ENCODE measurements at regions of chr20 and their contacts with region 1.

Region 1: GRCh38 chr20:48295445-48295963 is 510.2 kb upstream of the SULF2 start:
- DNase-seq: peak; percentile 88
- H3K4me3 ChIP-seq: no peak overlapping the region
- H3K27ac ChIP-seq: no peak overlapping the region
- H3K4me1 ChIP-seq: peaks cover 31% of the 10 kb centered on the region
- H3K27me3 ChIP-seq: no peaks in the 10 kb centered on the region
- CTCF ChIP-seq: peak; percentile 64 to 66

Region 2: GRCh38 chr20:47196091-47197081 is 1099.1 kb before region 1 on chr20:
- CTCF ChIA-PET with region 1: no interaction called
- dilution Hi-C with region 1: no loop called
- in situ Hi-C with region 1: no loop called
- intact Hi-C with region 1: loop called (anchors 5 kb)
- DNase-seq: peak; percentile 47
- H3K4me3 ChIP-seq: no peak overlapping the region
- H3K27ac ChIP-seq: no peak overlapping the region
- H3K4me1 ChIP-seq: peaks cover 10% of the 10 kb centered on the region
- H3K27me3 ChIP-seq: no peaks in the 10 kb centered on the region
- CTCF ChIP-seq: peak; percentile 86 to 96

Region 3: GRCh38 chr20:47677635-47678453 is 617.7 kb before region 1 on chr20:
- CTCF ChIA-PET with region 1: no interaction called
- dilution Hi-C with region 1: no loop called
- in situ Hi-C with region 1: loop called in 1 of 2 experiments (anchors 25 kb)
- intact Hi-C with region 1: loop called (anchors 1 kb)
- DNase-seq: peak; percentile 55
- H3K4me3 ChIP-seq: no peak overlapping the region
- H3K27ac ChIP-seq: no peak overlapping the region
- H3K4me1 ChIP-seq: no peaks in the 10 kb centered on the region
- H3K27me3 ChIP-seq: no peaks in the 10 kb centered on the region
- CTCF ChIP-seq: peak; percentile 68 to 79

Region 4: GRCh38 chr20:47792021-47792618 is 503.4 kb before region 1 on chr20:
- CTCF ChIA-PET with region 1: no interaction called
- dilution Hi-C with region 1: no loop called
- in situ Hi-C with region 1: loop called in 1 of 2 experiments (anchors 10 kb)
- intact Hi-C with region 1: loop called (anchors 1 kb)
- DNase-seq: peak; percentile 97
- H3K4me3 ChIP-seq: no peak overlapping the region
- H3K27ac ChIP-seq: peak overlapping the region; percentile 83
- H3K4me1 ChIP-seq: peaks cover 58% of the 10 kb centered on the region
- H3K27me3 ChIP-seq: no peaks in the 10 kb centered on the region
- CTCF ChIP-seq: no peak

Region 5: DNA sequence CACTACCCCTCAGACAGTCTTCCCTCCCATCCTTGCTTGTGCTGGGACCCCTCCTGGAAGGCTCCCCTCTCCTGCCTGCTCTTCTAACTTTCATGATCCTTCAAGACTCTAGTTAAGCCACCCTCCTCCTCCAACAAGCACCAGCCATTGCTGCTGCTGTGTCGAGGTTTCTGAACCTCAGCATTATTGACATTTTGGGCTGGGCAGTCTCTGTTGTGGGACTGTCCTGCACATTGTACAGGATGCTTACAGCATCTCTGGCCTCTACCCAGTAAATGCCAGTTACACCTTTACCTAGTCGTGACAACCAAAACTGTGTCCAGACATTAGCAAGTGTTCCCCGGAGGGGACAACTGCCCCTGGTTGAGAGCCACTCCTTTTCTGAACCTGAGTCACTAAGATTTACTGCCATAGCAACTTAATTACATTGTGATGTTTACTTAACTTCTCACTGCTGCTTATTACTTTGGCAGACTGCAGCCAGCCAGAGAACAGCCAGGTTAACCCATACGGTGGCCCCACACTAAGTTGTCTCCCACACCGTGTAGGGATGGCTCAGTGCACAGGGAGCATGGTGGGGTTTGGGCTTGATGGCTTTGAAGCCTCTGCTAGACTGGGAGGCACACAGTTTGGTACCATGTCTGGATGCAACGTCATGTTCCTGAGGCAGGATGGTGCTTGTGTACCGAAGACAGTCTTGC is 305.6 kb before region 1 on chr20:
- CTCF ChIA-PET with region 1: no interaction called
- dilution Hi-C with region 1: no loop called
- in situ Hi-C with region 1: no loop called
- intact Hi-C with region 1: loop called (anchors 10 kb)
- DNase-seq: no peak
- H3K4me3 ChIP-seq: no peak overlapping the region
- H3K27ac ChIP-seq: no peak overlapping the region
- H3K4me1 ChIP-seq: peaks cover 5% of the 10 kb centered on the region
- H3K27me3 ChIP-seq: no peaks in the 10 kb centered on the region
- CTCF ChIP-seq: no peak

Region 6: DNA sequence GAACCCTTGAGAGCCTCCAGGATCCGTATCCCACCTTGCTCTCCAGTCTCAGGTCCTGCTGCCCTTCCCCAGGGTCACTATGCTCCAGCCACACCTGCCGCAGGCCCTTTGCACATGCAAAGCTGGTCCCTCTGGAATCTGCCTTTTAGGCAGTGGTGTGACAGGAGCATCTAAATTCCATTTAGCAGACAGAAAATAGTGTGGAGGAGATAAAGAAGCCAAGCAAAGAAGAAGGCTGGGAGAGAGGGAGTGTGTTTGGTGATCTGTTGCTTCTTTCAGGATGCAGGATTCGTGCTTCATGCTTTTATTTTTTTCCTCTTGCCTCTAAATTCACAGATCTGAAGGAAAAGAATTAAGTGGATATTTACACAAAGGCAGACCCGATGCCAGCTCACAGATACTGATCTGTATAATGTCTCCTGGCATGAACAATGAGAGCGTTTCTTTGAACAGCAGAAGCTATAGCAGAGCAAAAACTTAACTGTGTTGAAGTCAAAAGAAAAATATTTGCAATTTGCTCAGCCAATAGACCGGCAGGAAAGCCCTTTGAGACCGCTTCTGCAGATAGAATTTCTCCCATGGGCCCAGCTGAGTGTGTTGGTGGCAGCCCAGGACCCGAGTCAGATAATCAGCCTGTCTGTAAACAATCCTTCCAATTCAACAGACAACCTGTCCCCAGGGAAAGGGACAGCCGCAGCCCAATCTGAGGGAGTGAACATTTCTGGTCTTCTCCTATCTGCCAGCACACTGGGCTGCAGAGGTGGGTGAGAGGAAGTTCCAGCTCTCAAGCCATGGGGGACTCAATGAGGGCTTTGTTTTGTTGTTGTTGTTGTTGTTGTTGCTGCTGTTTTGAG is 48.8 kb before region 1 on chr20:
- CTCF ChIA-PET with region 1: no interaction called
- dilution Hi-C with region 1: no loop called
- in situ Hi-C with region 1: no loop called
- intact Hi-C with region 1: no loop called
- DNase-seq: no peak
- H3K4me3 ChIP-seq: no peak overlapping the region
- H3K27ac ChIP-seq: no peak overlapping the region
- H3K4me1 ChIP-seq: no peaks in the 10 kb centered on the region
- H3K27me3 ChIP-seq: no peaks in the 10 kb centered on the region
- CTCF ChIP-seq: no peak